ENCODE measurements at regions of chr2 and their contacts with region 1.

Region 1: GRCh38 chr2:25499157-25499556 is 157.4 kb upstream of the DNMT3A start:
- DNase-seq: no peak
- ATAC-seq: no peak
- H3K4me3 ChIP-seq: no peak overlapping the region
- H3K27ac ChIP-seq: no peak overlapping the region
- H3K4me1 ChIP-seq: no peaks in the 10 kb centered on the region
- H3K27me3 ChIP-seq: no peaks in the 10 kb centered on the region
- CTCF ChIP-seq: no peak

Region 2: GRCh38 chr2:25539136-25539535 is 40.0 kb after region 1 on chr2:
- CTCF ChIA-PET with region 1: no interaction called
- POLR2A ChIA-PET with region 1: no interaction called
- intact Hi-C with region 1: no loop called
- DNase-seq: no peak
- ATAC-seq: no peak
- H3K4me3 ChIP-seq: no peak overlapping the region
- H3K27ac ChIP-seq: no peak overlapping the region
- H3K4me1 ChIP-seq: no peaks in the 10 kb centered on the region
- H3K27me3 ChIP-seq: no peaks in the 10 kb centered on the region
- CTCF ChIP-seq: no peak

Region 3: DNA sequence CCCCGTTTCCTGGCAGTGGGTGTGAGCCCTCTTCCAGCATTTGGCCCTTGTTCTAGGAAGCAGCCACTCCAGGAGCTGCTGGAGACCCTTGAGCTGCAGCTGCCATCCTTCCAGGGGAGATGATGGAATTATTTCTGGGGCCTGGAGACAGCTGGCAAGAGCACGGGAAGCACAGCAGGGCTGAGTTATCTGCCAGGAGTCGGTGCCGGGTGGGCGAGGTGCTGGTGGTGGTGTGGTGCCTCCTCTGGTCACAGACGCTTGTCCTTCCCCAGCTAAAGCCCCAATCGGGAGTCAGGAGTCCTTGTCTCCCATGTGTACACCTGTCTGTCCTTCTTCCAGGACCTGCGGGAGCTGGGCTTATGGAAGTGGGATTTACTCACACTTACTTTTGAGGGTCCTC is 1384.8 kb after region 1 on chr2:
- CTCF ChIA-PET with region 1: no interaction called
- POLR2A ChIA-PET with region 1: interaction called, 43 read pairs
- intact Hi-C with region 1: no loop called
- DNase-seq: no peak
- ATAC-seq: no peak
- H3K4me3 ChIP-seq: no peak overlapping the region
- H3K27ac ChIP-seq: no peak overlapping the region
- H3K4me1 ChIP-seq: no peaks in the 10 kb centered on the region
- H3K27me3 ChIP-seq: peaks cover 82% of the 10 kb centered on the region
- CTCF ChIP-seq: no peak